Right cardiac atrium (tissue), 5 donors: ENCODE measurements at regions of chr12 and their contacts with region 1.

Region 1: GRCh38 chr12:21788089-21788983 is 13.8 kb upstream of the KCNJ8 start:
- DNase-seq: no peak
- ATAC-seq: peak; percentile 29 to 60
- H3K4me3 ChIP-seq: no peak overlapping the region
- H3K27ac ChIP-seq: no peak overlapping the region
- H3K4me1 ChIP-seq: no peaks in the 10 kb centered on the region
- H3K27me3 ChIP-seq: no peaks in the 10 kb centered on the region

Region 2: DNA sequence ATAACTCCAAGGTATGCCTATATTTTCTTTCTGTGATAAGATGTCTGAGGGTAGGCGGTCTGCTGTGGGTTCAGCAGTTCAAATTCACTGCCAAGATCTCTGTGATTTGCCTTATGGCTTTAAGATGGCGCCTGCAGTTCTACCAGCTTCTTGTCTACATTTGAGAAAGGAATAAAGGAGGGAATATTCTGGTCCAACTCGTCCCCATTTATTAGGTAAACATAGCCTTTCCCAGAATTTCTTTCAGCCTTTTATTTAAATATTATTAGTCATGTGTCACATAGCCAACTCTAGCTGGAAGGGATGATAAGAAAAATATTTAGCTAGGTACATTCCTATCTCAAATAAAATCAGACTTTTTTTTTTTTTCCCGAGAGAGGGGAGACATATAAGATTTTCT is 62.6 kb before region 1 on chr12:
- intact Hi-C with region 1: no loop called
- DNase-seq: no peak
- ATAC-seq: no peak
- H3K4me3 ChIP-seq: no peak overlapping the region
- H3K27ac ChIP-seq: no peak overlapping the region
- H3K4me1 ChIP-seq: no peaks in the 10 kb centered on the region
- H3K27me3 ChIP-seq: no peaks in the 10 kb centered on the region

Region 3: DNA sequence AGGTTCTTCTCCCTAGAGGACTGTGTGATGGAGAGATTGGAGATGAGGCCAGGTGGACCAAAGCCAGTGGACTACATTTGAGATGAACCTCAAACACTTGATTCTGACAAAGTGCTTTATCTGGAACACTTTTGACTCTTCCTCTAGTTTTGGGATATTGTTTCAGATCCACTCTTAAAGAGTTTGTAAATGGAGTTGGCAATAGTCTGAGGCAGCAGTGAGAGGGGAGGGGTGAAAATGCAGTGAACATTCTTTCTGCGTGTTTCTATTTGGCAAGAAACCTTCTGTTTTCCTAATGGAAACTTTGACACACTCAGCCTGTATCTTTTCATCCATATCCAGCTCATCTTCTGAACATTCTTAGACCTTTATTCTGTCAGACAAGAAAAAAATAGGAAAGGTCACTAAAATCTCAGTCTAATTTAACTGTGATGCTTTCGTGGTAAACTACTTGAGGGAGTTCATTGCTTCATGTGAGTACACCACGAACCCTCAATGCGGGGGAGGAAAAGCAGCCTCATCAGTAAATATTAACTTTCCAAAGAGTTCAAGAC is 43.5 kb after region 1 on chr12:
- intact Hi-C with region 1: loop called in 1 of 4 experiments (anchors 10 kb)
- DNase-seq: peak in 2 of 3 donors; percentile 14 to 19
- ATAC-seq: peak; percentile 58 to 60
- H3K4me3 ChIP-seq: no peak overlapping the region
- H3K27ac ChIP-seq: peak overlapping the region; percentile 59
- H3K4me1 ChIP-seq: no peaks in the 10 kb centered on the region
- H3K27me3 ChIP-seq: no peaks in the 10 kb centered on the region